Activated T-helper 1 cell treated with anti-CD3 and anti-CD28 coated beads, Interleukin-12 subunit alpha, Interleukin-12 subunit beta, Interleukin-2, Interleukin-4 antibody, amounts not matched to agents 30 ng/mL and 10 ng/mL and 1 ng/mL, durations not matched to agents 14 hours and 24 hours and 36 hours (primary cell): ENCODE measurements at regions of chr19 and their contacts with region 1.

Region 1: DNA sequence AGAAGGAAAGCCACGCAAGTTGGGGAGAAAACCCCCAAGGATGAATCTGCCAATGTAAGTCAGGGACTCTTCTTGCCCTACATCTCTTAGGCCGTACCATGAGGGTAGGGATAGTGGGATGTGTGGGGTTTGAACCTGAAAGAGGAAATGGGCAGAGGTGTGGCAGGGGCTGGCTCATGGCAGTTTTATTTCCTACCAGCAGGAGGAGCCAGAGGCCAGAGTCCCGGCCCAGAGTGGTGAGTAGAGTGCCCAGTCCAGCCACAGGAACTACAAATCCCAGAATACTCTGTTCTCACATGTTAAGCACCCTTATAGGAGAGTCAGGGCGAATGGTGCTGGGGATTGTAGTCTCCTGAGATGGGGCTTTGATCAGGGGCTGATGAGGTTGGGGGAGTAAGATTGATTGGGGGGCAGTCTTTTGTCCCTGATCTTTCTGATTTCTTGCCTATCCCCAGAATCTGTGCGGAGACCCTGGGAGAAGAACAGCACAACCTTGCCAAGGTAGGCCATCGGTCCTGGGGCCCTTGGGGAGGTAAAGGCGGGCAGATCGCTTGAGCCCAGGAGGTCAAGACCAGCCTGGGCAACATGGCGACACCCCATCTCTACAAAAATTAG is 16.5 kb downstream of the VASP start:
- DNase-seq: peak; percentile 65
- H3K4me3 Mint-ChIP-seq: no peak overlapping the region
- H3K27ac Mint-ChIP-seq: peak overlapping the region; percentile 37
- H3K4me1 Mint-ChIP-seq: peaks cover 14% of the 10 kb centered on the region
- H3K27me3 Mint-ChIP-seq: no peaks in the 10 kb centered on the region

Region 2: GRCh38 chr19:45558399-45558878 is 34.7 kb after region 1 on chr19:
- intact Hi-C with region 1: loop called (anchors 1 kb)
- DNase-seq: peak; percentile 57
- H3K4me3 Mint-ChIP-seq: no peak overlapping the region
- H3K27ac Mint-ChIP-seq: no peak overlapping the region
- H3K4me1 Mint-ChIP-seq: peaks cover 10% of the 10 kb centered on the region
- H3K27me3 Mint-ChIP-seq: no peaks in the 10 kb centered on the region

Region 3: GRCh38 chr19:45569619-45570421 is 46.1 kb after region 1 on chr19:
- intact Hi-C with region 1: loop called (anchors 1 kb)
- DNase-seq: peak; percentile 37
- H3K4me3 Mint-ChIP-seq: no peak overlapping the region
- H3K27ac Mint-ChIP-seq: no peak overlapping the region
- H3K4me1 Mint-ChIP-seq: peaks cover 8% of the 10 kb centered on the region
- H3K27me3 Mint-ChIP-seq: no peaks in the 10 kb centered on the region

Region 4: GRCh38 chr19:45717166-45717982 is 193.6 kb after region 1 on chr19:
- intact Hi-C with region 1: loop called (anchors 1 kb)
- DNase-seq: peak; percentile 99
- H3K4me3 Mint-ChIP-seq: peak overlapping the region; percentile 96
- H3K27ac Mint-ChIP-seq: peak overlapping the region; percentile 96
- H3K4me1 Mint-ChIP-seq: peaks cover 40% of the 10 kb centered on the region
- H3K27me3 Mint-ChIP-seq: no peaks in the 10 kb centered on the region

Region 5: DNA sequence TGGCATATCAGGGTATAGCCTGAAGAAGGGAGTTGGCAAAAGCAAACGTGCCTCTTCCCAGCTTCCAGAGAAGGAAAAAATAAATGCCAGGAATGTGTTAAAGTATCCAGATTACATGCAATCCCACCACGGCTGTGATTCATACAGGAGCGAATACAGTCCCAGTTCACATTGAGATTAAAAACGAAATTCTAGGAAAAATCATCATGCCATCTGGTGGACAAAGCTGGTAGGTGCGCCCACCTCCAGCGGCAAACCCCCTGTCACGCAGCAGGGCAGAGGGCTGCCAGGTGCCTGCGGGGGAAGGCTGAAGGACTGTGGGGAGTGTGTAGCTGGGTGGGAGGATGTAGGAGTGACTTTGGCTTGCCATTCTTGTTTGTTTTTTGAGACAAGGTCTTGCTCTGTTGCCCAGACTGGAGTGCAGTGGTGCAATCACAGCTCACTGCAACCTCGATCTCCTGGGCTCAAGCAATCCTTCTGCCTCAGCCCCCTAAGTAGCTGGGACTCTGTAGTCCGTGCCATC is 275.3 kb after region 1 on chr19:
- intact Hi-C with region 1: no loop called
- DNase-seq: peak; percentile 33
- H3K4me3 Mint-ChIP-seq: no peak overlapping the region
- H3K27ac Mint-ChIP-seq: no peak overlapping the region
- H3K4me1 Mint-ChIP-seq: peaks cover 7% of the 10 kb centered on the region
- H3K27me3 Mint-ChIP-seq: peaks cover 49% of the 10 kb centered on the region